Sigmoid colon (tissue), 7 donors: ENCODE measurements at regions of chr13 and their contacts with region 1.

Region 1: DNA sequence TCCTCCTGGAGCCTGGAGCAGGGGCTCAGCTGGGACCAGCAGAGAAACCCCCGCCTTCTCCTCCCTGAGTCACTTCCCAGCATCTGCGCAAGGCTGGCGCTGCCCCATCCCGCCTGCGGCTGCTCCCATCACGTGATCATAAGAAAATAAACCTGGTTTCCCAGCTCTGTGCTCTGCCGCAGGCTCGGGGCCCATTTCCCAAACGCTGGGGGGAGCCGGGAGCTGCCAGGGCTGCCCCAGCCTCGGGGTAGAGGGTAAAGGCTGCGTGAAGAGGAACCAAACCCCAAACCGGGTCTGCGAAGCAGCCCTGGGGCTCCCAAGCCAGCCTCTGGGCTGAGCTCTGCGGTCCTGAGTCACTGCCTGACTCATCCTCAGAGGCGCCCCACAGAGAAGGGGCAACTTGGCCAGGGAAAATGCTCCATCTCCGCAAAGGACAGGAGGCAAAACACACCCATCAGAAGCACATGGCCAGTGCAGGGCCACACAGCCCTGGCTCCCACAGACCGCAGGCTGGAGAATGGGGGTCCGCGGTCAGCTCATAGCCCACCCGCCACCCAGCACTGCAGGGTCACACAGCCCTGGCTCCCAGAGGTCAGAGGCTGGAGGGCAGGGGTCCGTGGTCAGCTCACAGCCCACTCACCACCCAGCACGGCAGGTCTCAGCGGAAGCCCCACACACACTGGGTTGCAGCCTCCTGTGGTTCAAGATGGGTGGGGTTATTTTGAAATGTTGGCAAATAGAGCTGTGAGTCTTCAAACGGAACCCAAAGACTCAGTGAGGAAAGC is 67.1 kb downstream of the RASA3 start:
- DNase-seq: peak; percentile 96
- H3K4me3 ChIP-seq: peak overlapping the region in 3 of 4 donors; percentile 37 to 45 (median 43)
- H3K27ac ChIP-seq: peak overlapping the region; percentile 90 to 98 (median 96)
- H3K4me1 ChIP-seq: peaks cover 0 to 71% (median 68%) of the 10 kb centered on the region in 4 donors
- H3K27me3 ChIP-seq: no peaks in the 10 kb centered on the region
- CTCF ChIP-seq: no peak
- EP300 ChIP-seq: peak in 2 of 4 donors; percentile 69 to 88
- POLR2A ChIP-seq: no peak

Region 2: GRCh38 chr13:113458253-113459065 is 606.9 kb before region 1 on chr13:
- intact Hi-C with region 1: no loop called
- DNase-seq: peak; percentile 77
- H3K4me3 ChIP-seq: peak overlapping the region in 1 of 4 donors; percentile 0
- H3K27ac ChIP-seq: peak overlapping the region in 3 of 4 donors; percentile 63 to 76 (median 68)
- H3K4me1 ChIP-seq: peaks cover 0 to 34% (median 23%) of the 10 kb centered on the region in 4 donors
- H3K27me3 ChIP-seq: no peaks in the 10 kb centered on the region
- CTCF ChIP-seq: peak in 3 of 4 experiments; percentile 28 to 45 (median 32)
- EP300 ChIP-seq: no peak
- POLR2A ChIP-seq: no peak

Region 3: DNA sequence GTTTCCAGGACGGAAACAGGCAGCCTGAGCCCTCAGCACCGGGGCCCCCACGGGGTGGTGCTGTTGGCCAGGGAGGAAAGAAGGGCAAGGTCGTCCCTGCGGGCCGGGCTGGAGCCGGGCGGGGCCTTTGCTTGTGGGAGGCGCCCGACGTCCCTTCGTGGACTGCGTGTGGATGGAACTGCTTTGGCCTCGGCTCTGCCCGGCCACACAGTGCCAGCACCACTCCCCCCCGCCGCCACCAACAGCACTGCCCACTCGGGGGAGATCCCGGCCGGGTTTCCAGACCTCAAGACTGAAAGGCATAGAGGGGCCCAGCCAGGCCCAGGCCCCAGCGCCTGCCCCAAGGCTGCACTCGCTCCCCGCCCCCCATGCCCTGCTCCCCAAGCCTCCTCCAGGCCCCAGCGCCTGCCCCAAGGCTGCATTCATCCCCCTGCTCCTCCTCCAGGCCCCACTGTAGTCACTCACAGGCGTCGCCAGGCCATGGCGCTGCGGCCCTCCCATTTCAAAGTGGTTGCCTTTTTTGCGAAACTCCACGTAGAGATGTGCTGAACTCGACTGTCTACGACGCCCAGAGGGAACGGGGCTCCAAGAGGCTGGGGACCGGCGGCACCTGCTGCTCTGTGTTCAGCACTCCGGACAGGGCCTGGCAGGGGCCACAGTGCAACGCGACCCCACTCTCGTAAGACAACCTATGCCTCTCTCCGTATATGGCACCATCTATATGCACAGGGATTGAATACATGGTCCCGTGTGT is 113.9 kb before region 1 on chr13:
- intact Hi-C with region 1: loop called (anchors 5 kb)
- DNase-seq: peak; percentile 93
- H3K4me3 ChIP-seq: peak overlapping the region in 3 of 4 donors; percentile 25 to 36 (median 33)
- H3K27ac ChIP-seq: peak overlapping the region in 2 of 4 donors; percentile 25 to 42
- H3K4me1 ChIP-seq: peaks cover 0 to 22% (median 15%) of the 10 kb centered on the region in 4 donors
- H3K27me3 ChIP-seq: no peaks in the 10 kb centered on the region
- CTCF ChIP-seq: peak; percentile 71 to 88 (median 82)
- EP300 ChIP-seq: no peak
- POLR2A ChIP-seq: no peak

Region 4: GRCh38 chr13:114099191-114099590 is 33.9 kb after region 1 on chr13:
- intact Hi-C with region 1: loop called (anchors 2 kb)
- DNase-seq: peak; percentile 91
- H3K4me3 ChIP-seq: peak overlapping the region in 2 of 4 donors; percentile 12 to 30
- H3K27ac ChIP-seq: peak overlapping the region; percentile 69 to 79 (median 77)
- H3K4me1 ChIP-seq: peaks cover 0 to 37% (median 33%) of the 10 kb centered on the region in 4 donors
- H3K27me3 ChIP-seq: no peaks in the 10 kb centered on the region
- CTCF ChIP-seq: no peak
- EP300 ChIP-seq: no peak
- POLR2A ChIP-seq: no peak

Region 5: GRCh38 chr13:114132419-114133121 is 67.2 kb after region 1 on chr13 and contains the start of gene RASA3:
- intact Hi-C with region 1: loop called (anchors 1 kb)
- DNase-seq: peak; percentile 88
- H3K4me3 ChIP-seq: peak within 1 kb of the TSS; percentile 58 to 97 (median 76)
- H3K27ac ChIP-seq: peak within 1 kb of the TSS; percentile 74 to 88 (median 84)
- H3K4me1 ChIP-seq: peaks cover 0 to 39% (median 31%) of the 10 kb centered on the region in 4 donors
- H3K27me3 ChIP-seq: no peaks in the 10 kb centered on the region
- CTCF ChIP-seq: no peak
- EP300 ChIP-seq: no peak
- POLR2A ChIP-seq: no peak
- total RNA-seq, gene RASA3: 15.0 to 22.4 (median 17.8) TPM